SK-N-SH (cell line): ENCODE measurements at regions of chr1 and their contacts with region 1.

Region 1: GRCh38 chr1:204791453-204792353 is 79.0 kb upstream of the NFASC start:
- DNase-seq: peak; percentile 75
- H3K4me3 ChIP-seq: peak overlapping the region in 1 of 2 experiments; percentile 42; a peak in 1 of 4 replicates
- H3K27ac ChIP-seq: no peak overlapping the region
- H3K4me1 ChIP-seq: peaks cover 0 to 5% of the 10 kb centered on the region in 2 experiments; a peak in 2 of 4 replicates
- H3K27me3 ChIP-seq: peaks cover 26% of the 10 kb centered on the region; the same call in 1 of the 2 replicates
- CTCF ChIP-seq: peak; percentile 85
- EP300 ChIP-seq: no peak
- RAD21 ChIP-seq: peak; percentile 25; the same call in 1 of the 2 replicates

Region 2: GRCh38 chr1:204190212-204191211 is 601.2 kb before region 1 on chr1:
- CTCF ChIA-PET with region 1: no interaction called
- POLR2A ChIA-PET with region 1: no interaction called
- DNase-seq: no peak
- H3K4me3 ChIP-seq: no peak overlapping the region
- H3K27ac ChIP-seq: no peak overlapping the region
- H3K4me1 ChIP-seq: peaks cover 0 to 4% of the 10 kb centered on the region in 2 experiments; a peak in 2 of 4 replicates
- H3K27me3 ChIP-seq: no peaks in the 10 kb centered on the region; the same call in 1 of the 2 replicates
- CTCF ChIP-seq: no peak
- EP300 ChIP-seq: no peak
- RAD21 ChIP-seq: no peak

Region 3: DNA sequence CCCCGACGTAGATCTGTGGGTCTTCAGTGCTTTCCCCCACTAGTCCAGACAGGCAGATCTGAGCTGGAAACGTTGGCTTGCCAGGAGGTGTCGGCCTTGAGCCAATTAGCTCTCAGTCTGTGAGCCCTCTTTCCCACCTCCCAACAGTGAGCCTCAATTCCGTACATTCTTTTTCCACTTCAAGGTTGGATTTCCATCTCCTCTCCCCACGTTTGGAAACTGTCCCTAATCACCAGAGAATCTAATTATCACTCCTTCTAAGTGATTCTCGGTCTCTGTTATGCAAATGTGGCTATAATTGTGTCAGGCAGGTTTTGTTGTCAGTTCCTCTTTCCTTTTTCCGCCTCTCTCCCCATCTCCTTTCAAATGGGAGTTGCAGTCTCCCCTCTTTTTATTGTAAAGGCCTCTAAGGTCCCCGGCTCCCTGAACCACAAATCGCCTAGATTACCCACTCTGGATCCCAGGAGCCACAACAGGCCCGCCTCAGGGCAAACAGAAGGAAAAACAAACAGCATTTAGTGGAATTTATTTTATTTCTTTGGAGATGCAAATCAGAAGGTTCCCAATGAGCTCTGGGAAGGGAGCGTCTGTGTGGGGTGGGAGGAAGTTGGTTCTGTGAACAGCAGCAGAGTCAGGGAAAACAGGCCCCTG is 76.7 kb before region 1 on chr1:
- CTCF ChIA-PET with region 1: interaction called, 15 read pairs
- POLR2A ChIA-PET with region 1: no interaction called
- DNase-seq: peak; percentile 50
- H3K4me3 ChIP-seq: no peak overlapping the region
- H3K27ac ChIP-seq: no peak overlapping the region
- H3K4me1 ChIP-seq: peaks cover 0 to 11% of the 10 kb centered on the region in 2 experiments; a peak in 1 of 4 replicates
- H3K27me3 ChIP-seq: peaks cover 17% of the 10 kb centered on the region; the same call in 1 of the 2 replicates
- CTCF ChIP-seq: no peak
- EP300 ChIP-seq: no peak
- RAD21 ChIP-seq: peak; percentile 20; the same call in 1 of the 2 replicates

Region 4: GRCh38 chr1:204751894-204752687 is 39.6 kb before region 1 on chr1:
- CTCF ChIA-PET with region 1: interaction called, 14 read pairs
- POLR2A ChIA-PET with region 1: no interaction called
- DNase-seq: no peak
- H3K4me3 ChIP-seq: no peak overlapping the region
- H3K27ac ChIP-seq: no peak overlapping the region
- H3K4me1 ChIP-seq: peaks cover 0 to 4% of the 10 kb centered on the region in 2 experiments; a peak in 1 of 4 replicates
- H3K27me3 ChIP-seq: no peaks in the 10 kb centered on the region
- CTCF ChIP-seq: no peak
- EP300 ChIP-seq: no peak
- RAD21 ChIP-seq: no peak

Region 5: DNA sequence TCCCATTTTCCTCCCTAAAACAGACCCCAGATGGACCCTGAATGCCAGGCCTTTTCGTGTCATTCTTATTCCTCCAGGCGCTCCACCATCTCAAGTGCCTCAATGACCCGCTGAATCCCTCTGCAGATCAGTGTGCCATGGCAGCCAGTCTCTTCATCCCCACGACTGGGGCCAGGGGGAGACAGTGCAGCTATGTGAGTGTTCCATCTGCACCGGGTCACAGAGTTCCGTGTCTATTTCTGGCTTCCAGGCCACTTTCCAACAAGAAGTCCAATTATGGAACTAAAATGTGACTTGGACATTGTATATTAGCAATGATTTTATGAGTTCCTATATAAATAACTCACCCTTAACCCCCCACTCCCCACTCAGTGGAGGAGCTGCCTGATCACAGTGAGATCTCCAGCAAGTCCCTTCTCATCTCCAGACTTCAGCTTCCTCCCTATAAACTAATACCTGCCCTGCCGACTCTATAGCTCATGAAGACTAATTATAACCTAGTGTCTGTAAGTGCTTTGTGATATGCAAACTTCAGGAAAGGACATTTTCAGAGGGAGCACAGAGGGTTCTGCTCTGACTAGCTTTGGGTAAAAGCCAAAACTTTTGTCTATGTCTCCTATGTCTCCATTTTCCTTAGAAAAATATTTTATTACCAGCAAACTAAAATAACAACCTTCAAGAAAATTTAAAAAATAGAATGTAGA is 22.6 kb after region 1 on chr1:
- CTCF ChIA-PET with region 1: interaction called, 271 read pairs
- POLR2A ChIA-PET with region 1: no interaction called
- DNase-seq: no peak
- H3K4me3 ChIP-seq: no peak overlapping the region
- H3K27ac ChIP-seq: no peak overlapping the region
- H3K4me1 ChIP-seq: peaks cover 0 to 4% of the 10 kb centered on the region in 2 experiments; a peak in 1 of 4 replicates
- H3K27me3 ChIP-seq: peaks cover 26% of the 10 kb centered on the region
- CTCF ChIP-seq: no peak
- EP300 ChIP-seq: no peak
- RAD21 ChIP-seq: no peak